Activated CD8-positive, alpha-beta T cell treated with anti-CD3 and anti-CD28 coated beads for 36 hours (primary cell): ENCODE measurements at regions of chr22 and their contacts with region 1.

Region 1: GRCh38 chr22:31290494-31291471 is 1.5 kb downstream of the PIK3IP1 start:
- DNase-seq: peak; percentile 97
- ATAC-seq: peak; percentile 79
- H3K4me3 Mint-ChIP-seq: peak overlapping the region; percentile 94
- H3K27ac Mint-ChIP-seq: peak overlapping the region; percentile 97
- H3K4me1 Mint-ChIP-seq: peaks cover 61% of the 10 kb centered on the region
- H3K27me3 Mint-ChIP-seq: no peaks in the 10 kb centered on the region
- CTCF ChIP-seq: no peak

Region 2: GRCh38 chr22:31211862-31212730 is 78.7 kb before region 1 on chr22 and contains the start of gene LIMK2:
- CTCF ChIA-PET with region 1: interaction called, 19 read pairs
- POLR2A ChIA-PET with region 1: interaction called, 6 read pairs
- intact Hi-C with region 1: loop called (anchors 5 kb)
- DNase-seq: peak; percentile 99
- ATAC-seq: peak; percentile 99
- H3K4me3 Mint-ChIP-seq: peak within 1 kb of the TSS; percentile 82
- H3K27ac Mint-ChIP-seq: peak within 1 kb of the TSS; percentile 82
- H3K4me1 Mint-ChIP-seq: peaks cover 34% of the 10 kb centered on the region
- H3K27me3 Mint-ChIP-seq: no peaks in the 10 kb centered on the region
- CTCF ChIP-seq: peak; percentile 83
- total RNA-seq, gene LIMK2: 23.2 to 25.5 TPM

Region 3: GRCh38 chr22:31278622-31279326 is 12.0 kb before region 1 on chr22:
- CTCF ChIA-PET with region 1: interaction called, 47 read pairs
- POLR2A ChIA-PET with region 1: interaction called, 61 read pairs
- intact Hi-C with region 1: no loop called
- DNase-seq: peak; percentile 17
- ATAC-seq: peak; percentile 78
- H3K4me3 Mint-ChIP-seq: no peak overlapping the region
- H3K27ac Mint-ChIP-seq: peak overlapping the region; percentile 90
- H3K4me1 Mint-ChIP-seq: peaks cover 85% of the 10 kb centered on the region
- H3K27me3 Mint-ChIP-seq: no peaks in the 10 kb centered on the region
- CTCF ChIP-seq: no peak

Region 4: DNA sequence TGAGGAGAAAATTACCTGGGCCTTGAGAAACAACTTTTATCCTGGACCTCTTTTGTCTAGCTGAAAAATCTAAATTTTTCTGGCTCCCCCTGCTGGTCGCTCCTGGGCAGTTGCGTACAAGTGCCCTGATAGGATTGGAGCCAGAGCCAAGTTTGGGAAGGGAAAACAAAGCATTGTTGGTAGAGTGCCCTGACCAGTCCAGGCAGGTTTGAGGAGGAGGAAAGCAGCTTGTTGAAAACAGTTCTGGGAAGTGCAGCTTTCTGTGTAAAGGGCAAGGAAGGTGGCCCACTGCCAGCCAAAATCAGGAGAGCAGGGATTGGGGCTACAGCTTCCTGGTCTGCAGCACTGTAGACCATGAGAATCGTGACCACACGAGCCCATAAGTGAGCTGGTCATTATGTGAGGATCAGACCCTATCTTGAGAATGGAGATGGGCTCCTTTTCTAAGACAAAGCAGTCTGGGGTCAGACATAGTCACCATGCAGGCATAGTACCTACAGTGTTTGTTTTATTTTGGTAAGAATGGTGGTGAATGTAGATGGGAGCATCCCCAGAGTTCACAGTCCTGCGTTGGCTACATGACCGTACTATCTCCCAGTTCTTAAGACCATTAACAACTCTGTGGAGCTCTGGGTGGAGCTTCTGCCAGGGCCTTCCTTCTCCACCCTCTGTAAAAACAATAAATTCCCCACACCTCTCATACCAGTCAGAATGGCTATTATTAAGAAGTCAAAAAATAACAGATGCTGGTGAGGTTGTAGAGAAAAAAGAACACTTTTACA is 22.8 kb after region 1 on chr22:
- CTCF ChIA-PET with region 1: interaction called, 196 read pairs
- POLR2A ChIA-PET with region 1: interaction called, 11 read pairs
- intact Hi-C with region 1: no loop called
- DNase-seq: peak; percentile 80
- ATAC-seq: peak; percentile 70
- H3K4me3 Mint-ChIP-seq: no peak overlapping the region
- H3K27ac Mint-ChIP-seq: no peak overlapping the region
- H3K4me1 Mint-ChIP-seq: peaks cover 10% of the 10 kb centered on the region
- H3K27me3 Mint-ChIP-seq: no peaks in the 10 kb centered on the region
- CTCF ChIP-seq: peak; percentile 95